ENCODE measurements at regions of chr1 and their contacts with region 1.

Region 1: DNA sequence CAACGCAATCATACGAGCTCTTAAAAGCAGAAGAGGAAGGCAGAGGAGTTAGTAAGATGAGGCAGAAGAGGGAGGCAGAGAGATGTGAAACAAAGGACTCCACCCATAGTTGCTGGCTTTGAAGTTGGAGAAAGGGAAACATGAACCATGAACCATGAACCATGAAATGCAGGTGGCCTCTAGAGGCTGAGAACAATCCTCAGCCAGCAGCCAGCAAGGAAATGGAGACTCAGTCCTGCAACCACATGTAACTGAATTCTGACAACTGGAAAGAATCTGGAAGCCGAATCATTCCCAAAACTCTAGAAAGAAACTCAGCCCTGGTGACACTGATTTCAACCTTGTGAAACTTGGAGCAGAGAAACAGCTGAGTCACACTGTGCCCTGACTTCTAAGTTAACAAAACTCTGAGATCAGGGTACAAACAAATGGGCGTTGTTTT is 10.1 kb downstream of the DIPK1A start:
- DNase-seq: peak; percentile 79
- ATAC-seq: peak; percentile 80
- H3K4me3 ChIP-seq: 0 out of 2 replicates have a peak overlapping the region, but pooled peaks have one; percentile 0
- H3K27ac ChIP-seq: peak overlapping the region; percentile 79
- H3K4me1 ChIP-seq: peaks cover 37% of the 10 kb centered on the region
- H3K27me3 ChIP-seq: no peaks in the 10 kb centered on the region
- CTCF ChIP-seq: peak in 2 of 3 experiments; percentile 21 to 31; a peak in 3 of 6 replicates
- EP300 ChIP-seq: no peak
- POLR2A ChIP-seq: no peak
- RAD21 ChIP-seq: peak; percentile 29

Region 2: GRCh38 chr1:92924243-92924900 is 26.8 kb before region 1 on chr1:
- CTCF ChIA-PET with region 1: interaction called, 6 read pairs
- POLR2A ChIA-PET with region 1: interaction called, 5 read pairs
- RAD21 ChIA-PET with region 1: interaction called, 10 read pairs
- SMC1A ChIA-PET with region 1: interaction called, 14 read pairs
- in situ Hi-C with region 1: no loop called
- intact Hi-C with region 1: no loop called
- DNase-seq: no peak
- ATAC-seq: no peak
- H3K4me3 ChIP-seq: no peak overlapping the region
- H3K27ac ChIP-seq: no peak overlapping the region
- H3K4me1 ChIP-seq: peaks cover 13% of the 10 kb centered on the region
- H3K27me3 ChIP-seq: no peaks in the 10 kb centered on the region
- CTCF ChIP-seq: no peak
- EP300 ChIP-seq: no peak
- POLR2A ChIP-seq: no peak
- RAD21 ChIP-seq: no peak

Region 3: DNA sequence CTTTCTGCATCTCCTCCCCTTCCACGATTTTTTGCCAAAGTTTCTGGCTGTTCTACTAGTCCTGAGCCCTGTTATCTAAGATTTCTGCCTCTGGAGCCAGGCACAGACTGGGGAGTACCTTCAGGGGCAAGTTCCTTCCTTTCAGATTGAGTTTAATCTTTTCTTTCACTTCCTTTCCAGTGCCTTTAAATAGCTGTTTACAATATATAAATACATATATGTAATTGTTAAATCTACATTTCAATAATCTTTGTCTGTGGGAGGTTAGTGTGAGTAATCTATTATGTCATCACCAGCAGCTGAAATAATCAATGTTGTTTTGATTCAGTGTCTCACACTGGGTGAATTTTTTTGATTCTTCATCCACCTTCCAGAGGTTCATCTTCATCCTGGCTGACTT is 21.7 kb before region 1 on chr1:
- CTCF ChIA-PET with region 1: interaction called, 6 read pairs
- POLR2A ChIA-PET with region 1: interaction called, 5 read pairs
- RAD21 ChIA-PET with region 1: interaction called, 10 read pairs
- SMC1A ChIA-PET with region 1: interaction called, 37 read pairs
- in situ Hi-C with region 1: no loop called
- intact Hi-C with region 1: no loop called
- DNase-seq: no peak
- ATAC-seq: peak; percentile 78
- H3K4me3 ChIP-seq: peak overlapping the region; percentile 35; the same call in 1 of the 2 replicates
- H3K27ac ChIP-seq: peak overlapping the region; percentile 50
- H3K4me1 ChIP-seq: peaks cover 47% of the 10 kb centered on the region
- H3K27me3 ChIP-seq: no peaks in the 10 kb centered on the region
- CTCF ChIP-seq: no peak
- EP300 ChIP-seq: no peak
- POLR2A ChIP-seq: no peak
- RAD21 ChIP-seq: no peak

Region 4: GRCh38 chr1:92934395-92935378 is 16.5 kb before region 1 on chr1:
- CTCF ChIA-PET with region 1: interaction called, 7 read pairs
- POLR2A ChIA-PET with region 1: interaction called, 5 read pairs
- RAD21 ChIA-PET with region 1: interaction called, 8 read pairs
- SMC1A ChIA-PET with region 1: interaction called, 37 read pairs
- in situ Hi-C with region 1: no loop called
- intact Hi-C with region 1: no loop called
- DNase-seq: no peak
- ATAC-seq: 0 out of 3 replicates have a peak, but pooled peaks have one; percentile 21
- H3K4me3 ChIP-seq: no peak overlapping the region
- H3K27ac ChIP-seq: peak overlapping the region; percentile 0
- H3K4me1 ChIP-seq: peaks cover 37% of the 10 kb centered on the region
- H3K27me3 ChIP-seq: no peaks in the 10 kb centered on the region
- CTCF ChIP-seq: no peak
- EP300 ChIP-seq: no peak
- POLR2A ChIP-seq: no peak
- RAD21 ChIP-seq: no peak

Region 5: DNA sequence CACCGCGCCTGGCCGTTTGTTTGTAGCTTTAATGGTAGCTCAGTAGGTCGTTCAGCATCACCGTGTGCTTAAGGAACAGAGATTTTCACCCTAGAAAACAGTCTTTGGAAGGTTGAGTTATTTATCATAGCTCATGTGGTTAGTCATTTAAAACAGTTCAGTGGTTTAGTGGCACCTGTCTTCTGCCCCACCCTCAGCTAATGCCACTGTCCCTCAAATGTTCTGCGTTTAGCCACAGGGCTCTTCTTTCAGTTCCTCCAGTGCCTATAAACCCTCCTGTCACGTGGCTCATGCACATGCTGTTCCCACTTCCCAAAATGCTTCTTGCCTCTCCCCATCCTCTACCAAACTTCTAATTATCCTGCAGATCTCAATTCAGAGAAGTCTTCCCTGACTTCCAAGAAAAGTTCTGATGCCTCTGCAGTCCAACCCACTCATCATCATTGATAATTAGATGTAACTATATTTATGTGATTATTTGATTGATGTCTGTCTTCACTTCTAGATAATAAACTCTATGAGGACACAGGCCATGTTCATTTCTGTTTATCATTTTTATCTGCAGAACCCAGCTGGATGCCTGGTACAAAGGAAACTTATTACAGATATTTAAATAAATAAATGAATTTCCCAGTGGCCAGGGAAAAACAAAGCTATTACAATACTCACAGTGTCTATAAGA is 24.5 kb after region 1 on chr1:
- CTCF ChIA-PET with region 1: interaction called, 109 read pairs
- POLR2A ChIA-PET with region 1: interaction called, 8 read pairs
- RAD21 ChIA-PET with region 1: interaction called, 204 read pairs
- SMC1A ChIA-PET with region 1: interaction called, 163 read pairs
- in situ Hi-C with region 1: no loop called
- intact Hi-C with region 1: no loop called
- DNase-seq: peak; percentile 97
- ATAC-seq: peak; percentile 76
- H3K4me3 ChIP-seq: 0 out of 2 replicates have a peak overlapping the region, but pooled peaks have one; percentile 58
- H3K27ac ChIP-seq: peak overlapping the region; percentile 89
- H3K4me1 ChIP-seq: peaks cover 50% of the 10 kb centered on the region
- H3K27me3 ChIP-seq: no peaks in the 10 kb centered on the region
- CTCF ChIP-seq: no peak
- EP300 ChIP-seq: peak; percentile 89 to 92
- POLR2A ChIP-seq: no peak
- RAD21 ChIP-seq: no peak

Measured in GM12878 (cell line).